ENCODE measurements at regions of chr6 and their contacts with region 1.

Region 1: GRCh38 chr6:83978324-83978734 is 55.2 kb upstream of the MRAP2 start:
- DNase-seq: peak in 1 of 4 experiments; percentile 47
- ATAC-seq: no peak
- H3K4me3 ChIP-seq: no peak overlapping the region
- H3K27ac ChIP-seq: peak overlapping the region; percentile 79; the same call in 2 of the 3 replicates
- H3K4me1 ChIP-seq: peaks cover 0 to 52% of the 10 kb centered on the region in 2 experiments; a peak in 4 of 5 replicates
- H3K27me3 ChIP-seq: no peaks in the 10 kb centered on the region
- CTCF ChIP-seq: no peak
- EP300 ChIP-seq: 0 out of 2 replicates have a peak, but pooled peaks have one; percentile 34
- POLR2A ChIP-seq: no peak
- RAD21 ChIP-seq: no peak

Region 2: GRCh38 chr6:83884523-83884922 is 93.8 kb before region 1 on chr6:
- CTCF ChIA-PET with region 1: no interaction called
- POLR2A ChIA-PET with region 1: no interaction called
- in situ Hi-C with region 1: no loop called
- intact Hi-C with region 1: loop called (anchors 5 kb)
- DNase-seq: peak; percentile 38 to 75 (median 50)
- ATAC-seq: peak; percentile 90
- H3K4me3 ChIP-seq: no peak overlapping the region
- H3K27ac ChIP-seq: no peak overlapping the region
- H3K4me1 ChIP-seq: no peaks in the 10 kb centered on the region
- H3K27me3 ChIP-seq: no peaks in the 10 kb centered on the region
- CTCF ChIP-seq: peak; percentile 60 to 91 (median 62); a peak in 5 of 6 replicates
- EP300 ChIP-seq: peak; percentile 14; the same call in 1 of the 2 replicates
- POLR2A ChIP-seq: no peak
- RAD21 ChIP-seq: peak; percentile 99 to 100

Region 3: DNA sequence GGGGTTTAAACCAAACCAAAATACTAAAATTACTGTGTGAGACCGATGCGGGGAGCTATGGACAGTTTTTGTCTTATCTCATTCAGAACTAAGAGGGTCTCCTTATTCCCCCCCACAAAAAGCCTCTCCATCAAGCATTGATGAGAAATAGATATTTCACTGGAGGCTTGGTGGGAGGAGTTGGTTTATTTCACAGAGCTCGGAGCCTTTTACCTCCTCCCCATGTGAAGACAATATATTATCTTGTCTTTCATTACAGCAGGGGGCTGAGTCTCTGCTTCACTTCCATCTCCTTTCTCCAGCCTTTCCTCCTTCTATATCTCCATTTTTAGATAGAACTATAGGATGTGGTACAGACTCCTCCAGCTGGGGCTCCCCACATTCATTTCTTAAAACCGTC is 25.3 kb after region 1 on chr6:
- CTCF ChIA-PET with region 1: no interaction called
- POLR2A ChIA-PET with region 1: interaction called, 3 read pairs
- in situ Hi-C with region 1: no loop called
- intact Hi-C with region 1: loop called (anchors 1 kb)
- DNase-seq: no peak
- ATAC-seq: no peak
- H3K4me3 ChIP-seq: no peak overlapping the region
- H3K27ac ChIP-seq: no peak overlapping the region
- H3K4me1 ChIP-seq: no peaks in the 10 kb centered on the region
- H3K27me3 ChIP-seq: no peaks in the 10 kb centered on the region
- CTCF ChIP-seq: no peak
- EP300 ChIP-seq: no peak
- POLR2A ChIP-seq: no peak
- RAD21 ChIP-seq: no peak

Region 4: GRCh38 chr6:84033523-84034451 is 55.5 kb after region 1 on chr6 and contains the start of gene MRAP2:
- CTCF ChIA-PET with region 1: no interaction called
- POLR2A ChIA-PET with region 1: no interaction called
- in situ Hi-C with region 1: no loop called
- intact Hi-C with region 1: loop called (anchors 5 kb)
- DNase-seq: peak; percentile 68 to 73 (median 72)
- ATAC-seq: peak; percentile 95
- H3K4me3 ChIP-seq: peak within 1 kb of the TSS; percentile 93
- H3K27ac ChIP-seq: peak within 1 kb of the TSS; percentile 68
- H3K4me1 ChIP-seq: peaks cover 15% of the 10 kb centered on the region in 2 experiments
- H3K27me3 ChIP-seq: no peaks in the 10 kb centered on the region
- CTCF ChIP-seq: no peak
- EP300 ChIP-seq: no peak
- POLR2A ChIP-seq: no peak
- RAD21 ChIP-seq: peak in 1 of 2 experiments; percentile 11; a peak in 2 of 4 replicates
- polyA plus RNA-seq, gene MRAP2: 5.9 to 6.8 TPM

Region 5: GRCh38 chr6:84052204-84052882 is 74.0 kb after region 1 on chr6:
- CTCF ChIA-PET with region 1: no interaction called
- POLR2A ChIA-PET with region 1: no interaction called
- in situ Hi-C with region 1: no loop called
- intact Hi-C with region 1: loop called (anchors 5 kb)
- DNase-seq: peak; percentile 55 to 84 (median 69)
- ATAC-seq: peak; percentile 93
- H3K4me3 ChIP-seq: 0 out of 2 replicates have a peak overlapping the region, but pooled peaks have one; percentile 2
- H3K27ac ChIP-seq: peak overlapping the region; percentile 65
- H3K4me1 ChIP-seq: peaks cover 24 to 33% of the 10 kb centered on the region in 2 experiments
- H3K27me3 ChIP-seq: no peaks in the 10 kb centered on the region
- CTCF ChIP-seq: peak in 2 of 3 experiments; percentile 8 to 29; a peak in 3 of 6 replicates
- EP300 ChIP-seq: no peak
- POLR2A ChIP-seq: no peak
- RAD21 ChIP-seq: peak in 1 of 2 experiments; percentile 27; a peak in 1 of 4 replicates

Region 6: GRCh38 chr6:84220809-84221409 is 242.6 kb after region 1 on chr6:
- CTCF ChIA-PET with region 1: no interaction called
- POLR2A ChIA-PET with region 1: no interaction called
- in situ Hi-C with region 1: no loop called
- intact Hi-C with region 1: loop called (anchors 10 kb)
- DNase-seq: peak in 3 of 4 experiments; percentile 11 to 58 (median 16)
- ATAC-seq: 0 out of 3 replicates have a peak, but pooled peaks have one; percentile 49
- H3K4me3 ChIP-seq: no peak overlapping the region
- H3K27ac ChIP-seq: no peak overlapping the region
- H3K4me1 ChIP-seq: peaks cover 0 to under 1% of the 10 kb centered on the region in 2 experiments; a peak in 2 of 5 replicates
- H3K27me3 ChIP-seq: no peaks in the 10 kb centered on the region
- CTCF ChIP-seq: peak in 2 of 3 experiments; percentile 43 to 65; a peak in 4 of 6 replicates
- EP300 ChIP-seq: no peak
- POLR2A ChIP-seq: no peak
- RAD21 ChIP-seq: peak; percentile 81 to 84

Region 7: GRCh38 chr6:84269947-84270733 is 291.8 kb after region 1 on chr6:
- CTCF ChIA-PET with region 1: no interaction called
- POLR2A ChIA-PET with region 1: no interaction called
- in situ Hi-C with region 1: no loop called
- intact Hi-C with region 1: loop called (anchors 2 kb)
- DNase-seq: peak; percentile 45 to 92 (median 70)
- ATAC-seq: peak; percentile 94
- H3K4me3 ChIP-seq: no peak overlapping the region
- H3K27ac ChIP-seq: peak overlapping the region; percentile 87
- H3K4me1 ChIP-seq: peaks cover 0 to 27% of the 10 kb centered on the region in 2 experiments; a peak in 2 of 5 replicates
- H3K27me3 ChIP-seq: no peaks in the 10 kb centered on the region
- CTCF ChIP-seq: no peak
- EP300 ChIP-seq: peak; percentile 99
- POLR2A ChIP-seq: no peak
- RAD21 ChIP-seq: no peak; a peak in 1 of 4 replicates